Activated CD4-positive, alpha-beta memory T cell treated with anti-CD3 and anti-CD28 coated beads, Interleukin-2, amount 10 ng/mL, durations not matched to agents 7 days and 5 days (primary cell): ENCODE measurements at regions of chr11 and their contacts with region 1.

Region 1: GRCh38 chr11:75204685-75205563 is 35.6 kb upstream of the TPBGL start:
- DNase-seq: peak; percentile 87
- H3K4me3 Mint-ChIP-seq: no peak overlapping the region
- H3K27ac Mint-ChIP-seq: no peak overlapping the region
- H3K4me1 Mint-ChIP-seq: no peaks in the 10 kb centered on the region
- H3K27me3 Mint-ChIP-seq: peaks cover 6% of the 10 kb centered on the region

Region 2: DNA sequence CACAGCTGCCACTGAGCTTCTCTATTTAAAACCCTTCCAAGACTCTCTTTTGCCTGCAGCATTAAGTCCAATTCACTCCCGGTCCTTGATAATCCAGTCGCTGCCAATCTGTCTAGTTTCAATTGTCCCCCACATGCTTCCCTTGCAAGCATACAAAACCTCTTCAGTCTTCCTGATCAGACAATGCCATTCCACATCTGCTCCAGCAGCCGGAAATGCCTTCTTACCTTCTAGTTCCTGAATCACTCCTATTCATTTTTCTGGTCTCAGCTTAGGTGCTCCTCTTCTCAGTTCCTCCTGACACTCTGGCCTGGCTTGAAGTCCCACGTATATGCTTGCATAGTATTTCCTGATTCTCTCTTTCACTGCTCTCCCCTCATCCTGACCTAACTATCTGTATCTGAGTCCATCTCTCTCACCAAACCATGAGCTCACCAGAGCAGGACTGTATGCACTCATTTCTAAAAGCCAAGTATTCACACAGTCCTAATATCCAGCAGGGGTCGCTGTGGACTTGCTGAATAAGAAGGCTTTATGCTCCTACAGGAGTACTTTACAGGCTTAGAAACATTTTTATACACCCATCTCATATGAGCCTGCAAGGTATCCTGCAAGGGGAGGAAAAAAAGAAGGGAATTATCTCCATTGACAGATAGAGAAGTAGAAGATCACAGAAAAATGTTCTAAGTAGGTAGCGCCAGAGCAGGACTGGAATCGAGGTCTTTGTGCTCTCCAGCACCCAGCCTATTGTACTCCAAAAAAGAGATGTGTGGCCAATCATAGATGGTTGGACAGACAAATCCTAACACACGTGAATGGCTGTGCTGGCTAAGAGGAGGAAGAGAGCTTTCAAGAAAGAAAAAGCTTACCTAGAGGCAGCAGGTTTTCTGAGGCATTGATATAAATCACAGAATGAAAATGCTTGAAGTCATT is 275.2 kb before region 1 on chr11:
- CTCF ChIA-PET with region 1: interaction called, 36 read pairs
- POLR2A ChIA-PET with region 1: no interaction called
- DNase-seq: peak; percentile 76
- H3K4me3 Mint-ChIP-seq: no peak overlapping the region
- H3K27ac Mint-ChIP-seq: no peak overlapping the region
- H3K4me1 Mint-ChIP-seq: peaks cover 53% of the 10 kb centered on the region
- H3K27me3 Mint-ChIP-seq: no peaks in the 10 kb centered on the region

Region 3: DNA sequence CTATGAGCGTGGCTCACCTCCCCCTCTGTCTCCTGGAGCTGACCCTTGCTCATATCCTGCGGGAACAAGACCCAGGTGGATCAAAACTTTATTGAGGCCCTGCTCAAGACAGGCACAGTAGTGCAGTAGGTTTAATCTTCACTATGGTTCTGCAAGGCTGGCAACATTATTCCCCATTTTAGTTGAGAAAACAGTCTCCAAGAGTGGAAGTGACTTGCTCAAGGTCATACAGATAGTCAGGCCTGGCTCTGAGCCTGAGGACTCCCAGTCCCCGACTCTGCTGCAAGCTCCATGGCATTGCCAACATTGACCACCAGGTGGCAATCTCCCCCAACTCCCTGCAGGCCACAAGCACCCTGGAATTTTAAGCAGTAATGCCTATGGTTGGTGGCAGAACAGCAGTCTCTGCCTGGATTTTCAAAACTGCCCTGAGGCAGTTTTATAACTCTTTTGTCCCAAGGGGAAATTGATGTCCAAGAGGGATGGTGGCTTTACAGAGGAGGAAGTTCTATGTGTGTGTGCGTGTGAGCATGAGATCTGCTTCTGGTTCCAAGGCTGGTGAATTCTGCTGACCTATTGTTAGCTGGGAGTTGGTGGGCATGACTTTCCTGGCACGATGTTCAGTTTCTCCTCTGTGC is 182.0 kb before region 1 on chr11:
- CTCF ChIA-PET with region 1: interaction called, 18 read pairs
- POLR2A ChIA-PET with region 1: no interaction called
- DNase-seq: peak; percentile 79
- H3K4me3 Mint-ChIP-seq: no peak overlapping the region
- H3K27ac Mint-ChIP-seq: no peak overlapping the region
- H3K4me1 Mint-ChIP-seq: no peaks in the 10 kb centered on the region
- H3K27me3 Mint-ChIP-seq: no peaks in the 10 kb centered on the region

Region 4: GRCh38 chr11:75100314-75100713 is 104.6 kb before region 1 on chr11:
- CTCF ChIA-PET with region 1: no interaction called
- POLR2A ChIA-PET with region 1: no interaction called
- DNase-seq: peak; percentile 43
- H3K4me3 Mint-ChIP-seq: no peak overlapping the region
- H3K27ac Mint-ChIP-seq: no peak overlapping the region
- H3K4me1 Mint-ChIP-seq: peaks cover 28% of the 10 kb centered on the region
- H3K27me3 Mint-ChIP-seq: peaks cover 16% of the 10 kb centered on the region

Region 5: GRCh38 chr11:75174781-75175370 is 30.0 kb before region 1 on chr11:
- CTCF ChIA-PET with region 1: interaction called, 12 read pairs
- POLR2A ChIA-PET with region 1: interaction called, 3 read pairs
- DNase-seq: peak; percentile 70
- H3K4me3 Mint-ChIP-seq: peak overlapping the region; percentile 4
- H3K27ac Mint-ChIP-seq: peak overlapping the region; percentile 86
- H3K4me1 Mint-ChIP-seq: peaks cover 28% of the 10 kb centered on the region
- H3K27me3 Mint-ChIP-seq: peaks cover 8% of the 10 kb centered on the region

Region 6: GRCh38 chr11:75219866-75220265 is 14.9 kb after region 1 on chr11:
- CTCF ChIA-PET with region 1: interaction called, 10 read pairs
- POLR2A ChIA-PET with region 1: no interaction called
- DNase-seq: no peak
- H3K4me3 Mint-ChIP-seq: no peak overlapping the region
- H3K27ac Mint-ChIP-seq: no peak overlapping the region
- H3K4me1 Mint-ChIP-seq: no peaks in the 10 kb centered on the region
- H3K27me3 Mint-ChIP-seq: peaks cover 21% of the 10 kb centered on the region

Region 7: GRCh38 chr11:75241036-75241905 is 36.3 kb after region 1 on chr11:
- CTCF ChIA-PET with region 1: interaction called, 25 read pairs
- POLR2A ChIA-PET with region 1: interaction called, 3 read pairs
- DNase-seq: peak; percentile 89
- H3K4me3 Mint-ChIP-seq: peak overlapping the region; percentile 67
- H3K27ac Mint-ChIP-seq: no peak overlapping the region
- H3K4me1 Mint-ChIP-seq: peaks cover 10% of the 10 kb centered on the region
- H3K27me3 Mint-ChIP-seq: peaks cover 68% of the 10 kb centered on the region

Region 8: DNA sequence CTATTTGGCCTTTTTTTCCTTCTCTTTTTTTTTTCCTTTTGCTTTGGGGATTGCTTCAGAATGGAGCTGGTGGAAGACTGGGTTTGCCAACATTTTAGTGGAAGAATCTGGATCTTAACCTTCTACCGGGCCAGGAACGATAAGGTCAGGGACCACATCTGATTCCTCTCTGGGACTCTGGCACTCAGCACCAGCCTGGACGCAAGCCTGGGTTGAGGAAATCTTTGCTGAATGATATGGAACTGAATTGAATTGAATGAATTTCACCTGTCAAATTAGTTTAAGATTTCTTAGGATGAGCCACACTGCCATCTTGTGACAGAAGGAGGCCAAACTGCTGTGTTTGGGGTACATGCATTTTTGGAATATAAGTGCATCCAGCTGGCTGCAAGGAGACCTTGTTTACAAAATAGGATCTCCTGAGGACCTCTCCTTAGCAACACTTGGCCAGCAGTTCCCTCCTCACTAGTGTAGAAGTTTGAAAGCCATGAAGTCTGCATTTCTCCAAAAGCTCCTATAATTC is 66.0 kb after region 1 on chr11:
- CTCF ChIA-PET with region 1: interaction called, 12 read pairs
- POLR2A ChIA-PET with region 1: no interaction called
- DNase-seq: peak; percentile 41
- H3K4me3 Mint-ChIP-seq: no peak overlapping the region
- H3K27ac Mint-ChIP-seq: no peak overlapping the region
- H3K4me1 Mint-ChIP-seq: peaks cover 23% of the 10 kb centered on the region
- H3K27me3 Mint-ChIP-seq: no peaks in the 10 kb centered on the region